ENCODE measurements at regions of chr4 and their contacts with region 1.

Region 1: DNA sequence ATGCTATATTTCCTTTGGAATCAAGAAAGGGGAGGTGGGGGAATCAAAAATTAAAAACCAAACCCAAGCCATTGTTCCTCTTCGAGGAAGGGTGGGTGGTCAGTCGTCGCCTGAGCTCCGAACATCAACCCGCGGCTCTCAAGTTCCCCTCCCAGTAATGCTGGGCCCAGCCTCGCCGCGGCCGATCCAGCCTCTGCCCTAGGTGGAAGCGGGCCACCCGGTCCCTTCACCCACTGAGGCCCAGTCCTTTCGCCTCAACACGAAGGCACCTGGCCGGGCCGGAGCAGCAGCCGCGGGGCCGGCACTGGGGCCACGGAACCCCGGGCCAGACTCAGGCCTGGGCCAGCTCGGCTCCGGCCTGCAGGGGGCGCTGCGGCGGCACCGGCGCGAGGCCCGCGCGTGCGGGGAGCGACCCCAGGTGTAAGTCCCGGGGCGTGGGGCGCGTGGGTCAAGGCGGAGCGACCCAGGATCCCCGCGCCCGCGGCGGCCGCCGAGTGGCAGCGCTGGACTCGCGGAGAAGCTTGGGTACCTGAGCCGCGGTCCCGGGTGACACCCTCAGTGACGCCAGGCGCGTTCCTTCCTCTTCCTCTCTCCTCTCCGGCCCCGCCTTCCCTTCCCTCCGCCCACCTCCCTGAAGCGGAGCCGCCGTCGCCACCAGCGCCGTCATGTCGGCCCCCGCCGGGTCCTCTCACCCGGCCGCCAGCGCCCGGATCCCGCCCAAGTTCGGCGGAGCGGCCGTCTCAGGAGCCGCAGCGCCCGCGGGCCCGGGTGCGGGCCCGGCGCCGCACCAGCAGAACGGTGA is at the start of gene SEC24B:
- DNase-seq: no peak
- H3K4me3 ChIP-seq: peak within 1 kb of the TSS; percentile 81
- H3K27ac ChIP-seq: peak within 1 kb of the TSS; percentile 86
- H3K27me3 ChIP-seq: no peaks in the 10 kb centered on the region
- CTCF ChIP-seq: peak; percentile 56
- polyA plus RNA-seq, gene SEC24B: 45.1 and 55.9 TPM in 2 replicates

Region 2: DNA sequence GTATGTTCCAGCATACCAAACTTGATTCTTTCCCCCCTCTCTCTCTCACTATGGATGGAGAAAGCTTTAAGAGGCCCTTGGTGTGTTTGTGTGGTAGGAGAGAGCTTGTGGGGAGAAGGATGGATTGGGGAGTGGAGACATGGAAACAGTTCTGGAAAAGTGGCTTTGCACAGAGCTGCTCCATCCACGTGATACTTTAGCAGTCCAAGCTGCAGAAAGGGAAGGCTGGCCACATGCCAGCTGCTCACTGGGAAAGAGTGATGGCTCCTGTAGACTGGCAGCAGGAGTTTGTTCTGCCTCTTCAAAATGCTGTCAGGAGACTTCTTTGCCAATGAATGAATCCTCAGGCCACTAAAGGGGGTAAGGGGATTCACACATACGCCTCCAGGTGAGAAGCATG is 21.4 kb before region 1 on chr4:
- CTCF ChIA-PET with region 1: interaction called, 10 read pairs
- POLR2A ChIA-PET with region 1: no interaction called
- DNase-seq: no peak
- H3K4me3 ChIP-seq: no peak overlapping the region
- H3K27ac ChIP-seq: no peak overlapping the region
- H3K27me3 ChIP-seq: no peaks in the 10 kb centered on the region
- CTCF ChIP-seq: no peak

Region 3: GRCh38 chr4:109444182-109444844 is 10.9 kb after region 1 on chr4:
- CTCF ChIA-PET with region 1: interaction called, 24 read pairs
- POLR2A ChIA-PET with region 1: no interaction called
- DNase-seq: no peak
- H3K4me3 ChIP-seq: no peak overlapping the region
- H3K27ac ChIP-seq: no peak overlapping the region
- H3K27me3 ChIP-seq: no peaks in the 10 kb centered on the region
- CTCF ChIP-seq: no peak

Region 4: GRCh38 chr4:109486007-109486406 is 52.6 kb after region 1 on chr4:
- CTCF ChIA-PET with region 1: interaction called, 11 read pairs
- POLR2A ChIA-PET with region 1: no interaction called
- DNase-seq: no peak
- H3K4me3 ChIP-seq: no peak overlapping the region
- H3K27ac ChIP-seq: no peak overlapping the region
- H3K27me3 ChIP-seq: no peaks in the 10 kb centered on the region
- CTCF ChIP-seq: no peak

Region 5: DNA sequence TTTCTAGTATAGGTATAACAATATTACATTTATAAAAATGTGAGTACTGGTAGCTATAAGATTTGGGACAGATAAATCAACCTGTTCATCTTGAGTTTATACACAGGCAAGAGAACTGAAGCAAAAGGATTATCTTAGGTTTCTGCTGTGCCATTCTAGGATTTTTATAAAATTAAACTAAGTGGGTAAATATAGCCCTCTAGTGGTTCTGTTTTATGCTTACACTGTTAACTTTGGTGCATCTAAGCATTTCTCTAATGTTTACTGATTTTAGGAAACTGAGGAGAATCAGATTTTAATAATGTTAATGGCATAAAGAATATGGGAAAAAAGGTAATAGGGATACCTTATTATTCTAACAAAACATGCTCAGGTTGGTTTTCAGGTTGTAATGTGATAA is 393.3 kb after region 1 on chr4:
- CTCF ChIA-PET with region 1: interaction called, 31 read pairs
- POLR2A ChIA-PET with region 1: no interaction called
- DNase-seq: no peak
- H3K4me3 ChIP-seq: no peak overlapping the region
- H3K27ac ChIP-seq: no peak overlapping the region
- H3K27me3 ChIP-seq: no peaks in the 10 kb centered on the region
- CTCF ChIP-seq: peak; percentile 67

Measured in AG04450 (cell line).